Heart right ventricle (tissue), 16 donors: ENCODE measurements at regions of chr12 and their contacts with region 1.

Region 1: DNA sequence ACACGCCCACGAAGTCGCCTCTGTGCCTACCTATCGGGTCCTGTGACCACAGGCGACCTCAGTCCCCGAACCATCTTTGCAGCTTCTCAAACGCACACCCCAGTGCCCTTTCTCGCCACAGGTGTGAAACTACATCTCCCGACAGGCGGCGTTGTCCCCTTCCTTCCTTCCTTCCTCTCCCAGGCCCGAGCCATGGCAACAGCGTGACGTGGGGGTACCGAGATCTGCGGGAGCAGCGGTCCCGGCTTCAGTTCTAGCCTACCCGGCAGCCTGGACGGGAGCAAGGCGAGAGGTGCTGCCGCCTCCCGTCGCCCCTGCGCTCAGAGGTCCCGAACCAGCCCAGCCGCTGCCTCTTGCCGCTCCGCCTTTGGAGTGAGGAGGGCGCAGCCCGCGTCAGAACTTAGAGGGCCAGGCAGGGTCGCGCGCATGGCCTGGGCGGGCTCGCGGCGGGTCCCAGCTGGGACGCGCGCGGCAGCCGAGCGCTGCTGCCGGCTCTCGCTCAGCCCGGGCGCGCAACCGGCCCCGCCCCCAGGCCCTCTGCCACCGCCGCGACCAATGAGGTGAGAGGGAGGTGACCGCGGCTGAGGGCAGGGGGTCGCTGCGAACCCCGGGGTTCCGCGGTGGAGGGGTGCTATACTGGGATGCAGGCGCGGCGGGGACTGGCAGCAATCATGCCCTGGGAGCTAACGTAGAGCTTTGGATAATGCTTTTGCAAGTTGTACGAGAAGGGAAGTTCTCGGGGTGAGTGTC is at the start of gene COQ10A:
- DNase-seq: peak; percentile 88 to 92
- ATAC-seq: peak; percentile 90 to 97 (median 93)
- H3K4me3 ChIP-seq: peak within 1 kb of the TSS; percentile 57 to 90 (median 78)
- H3K27ac ChIP-seq: peak within 1 kb of the TSS; percentile 90 to 99 (median 96)
- H3K4me1 ChIP-seq: peaks cover 12 to 52% (median 23%) of the 10 kb centered on the region in 9 donors
- H3K27me3 ChIP-seq: no peaks in the 10 kb centered on the region
- CTCF ChIP-seq: peak; percentile 48 to 83 (median 68)
- total RNA-seq, gene COQ10A: 55.5 to 258 (median 147) TPM

Region 2: DNA sequence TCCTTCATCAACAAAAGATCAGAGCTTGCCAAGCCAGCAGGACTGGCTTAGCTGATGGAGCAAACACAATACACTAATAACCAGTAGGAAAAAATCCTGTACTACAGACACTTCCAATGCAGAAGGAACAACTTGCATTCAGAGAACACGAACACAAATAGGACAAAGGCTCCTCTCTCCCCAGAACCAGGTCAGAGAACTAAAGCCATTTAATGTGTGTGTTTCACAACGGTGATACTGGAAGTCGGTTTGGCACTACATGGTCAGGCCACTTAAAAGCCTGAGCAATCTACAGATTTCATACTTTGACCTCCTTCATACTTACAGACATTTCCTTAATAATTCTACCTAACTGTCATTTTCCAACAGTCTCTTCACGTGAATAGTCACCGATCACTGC is 26.9 kb after region 1 on chr12:
- intact Hi-C with region 1: loop called in 1 of 10 experiments (anchors 2 kb)
- DNase-seq: no peak
- ATAC-seq: peak in 2 of 8 donors; percentile 34 to 55
- H3K4me3 ChIP-seq: no peak overlapping the region
- H3K27ac ChIP-seq: peak overlapping the region in 4 of 10 donors; percentile 9 to 37 (median 26)
- H3K4me1 ChIP-seq: peaks cover 11 to 77% (median 58%) of the 10 kb centered on the region in 9 donors
- H3K27me3 ChIP-seq: no peaks in the 10 kb centered on the region
- CTCF ChIP-seq: no peak

Region 3: DNA sequence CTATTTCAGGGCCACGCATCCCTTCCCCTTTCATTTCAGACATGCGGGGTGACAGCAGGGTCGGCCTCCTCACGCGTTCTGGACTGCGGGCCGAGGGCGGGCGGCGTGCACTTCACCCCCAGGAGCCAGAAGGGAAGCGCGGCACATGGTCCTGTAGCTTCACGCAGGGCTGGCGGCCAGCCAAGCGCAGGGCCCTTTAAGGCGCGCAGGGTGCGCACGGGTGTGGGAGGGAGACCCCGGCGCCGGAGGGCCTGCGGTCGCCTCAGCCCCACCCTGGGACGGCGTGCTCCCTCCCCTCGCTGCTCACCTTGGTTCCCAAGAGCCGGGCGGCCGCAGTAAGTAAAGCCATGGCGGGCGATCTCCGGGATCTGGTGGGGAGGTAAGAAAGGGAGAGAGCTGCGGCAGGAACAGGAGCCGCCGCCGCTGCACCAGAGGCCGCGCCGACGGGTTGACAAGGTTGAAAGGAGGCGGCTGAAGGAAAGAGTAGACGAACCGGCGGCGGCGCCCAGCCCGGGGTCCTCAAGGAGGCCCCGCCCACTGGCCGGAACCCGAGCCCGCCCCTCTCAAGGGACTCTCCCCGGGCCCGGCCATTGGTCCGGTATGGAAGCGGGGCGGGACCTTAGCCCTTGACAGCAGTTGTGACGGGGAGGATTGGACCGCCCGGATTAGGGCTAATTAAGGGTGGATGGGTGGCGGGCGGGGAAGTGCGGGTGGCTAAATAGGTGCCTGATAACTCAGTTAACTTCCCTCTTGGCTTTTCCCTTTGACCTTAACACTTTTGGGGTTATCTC is 33.2 kb after region 1 on chr12 and contains the start of gene CS:
- intact Hi-C with region 1: loop called in 2 of 10 experiments (anchors 2 kb)
- DNase-seq: peak; percentile 98 to 99
- ATAC-seq: peak; percentile 97 to 99 (median 98)
- H3K4me3 ChIP-seq: peak within 1 kb of the TSS; percentile 68 to 99 (median 84)
- H3K27ac ChIP-seq: peak within 1 kb of the TSS; percentile 87 to 100 (median 96)
- H3K4me1 ChIP-seq: peaks cover 19 to 72% (median 58%) of the 10 kb centered on the region in 9 donors
- H3K27me3 ChIP-seq: no peaks in the 10 kb centered on the region
- CTCF ChIP-seq: no peak
- total RNA-seq, gene CS: 601 to 991 (median 877) TPM